Posterior cingulate gyrus (tissue), 11 donors: ENCODE measurements at regions of chr12 and their contacts with region 1.

Region 1: DNA sequence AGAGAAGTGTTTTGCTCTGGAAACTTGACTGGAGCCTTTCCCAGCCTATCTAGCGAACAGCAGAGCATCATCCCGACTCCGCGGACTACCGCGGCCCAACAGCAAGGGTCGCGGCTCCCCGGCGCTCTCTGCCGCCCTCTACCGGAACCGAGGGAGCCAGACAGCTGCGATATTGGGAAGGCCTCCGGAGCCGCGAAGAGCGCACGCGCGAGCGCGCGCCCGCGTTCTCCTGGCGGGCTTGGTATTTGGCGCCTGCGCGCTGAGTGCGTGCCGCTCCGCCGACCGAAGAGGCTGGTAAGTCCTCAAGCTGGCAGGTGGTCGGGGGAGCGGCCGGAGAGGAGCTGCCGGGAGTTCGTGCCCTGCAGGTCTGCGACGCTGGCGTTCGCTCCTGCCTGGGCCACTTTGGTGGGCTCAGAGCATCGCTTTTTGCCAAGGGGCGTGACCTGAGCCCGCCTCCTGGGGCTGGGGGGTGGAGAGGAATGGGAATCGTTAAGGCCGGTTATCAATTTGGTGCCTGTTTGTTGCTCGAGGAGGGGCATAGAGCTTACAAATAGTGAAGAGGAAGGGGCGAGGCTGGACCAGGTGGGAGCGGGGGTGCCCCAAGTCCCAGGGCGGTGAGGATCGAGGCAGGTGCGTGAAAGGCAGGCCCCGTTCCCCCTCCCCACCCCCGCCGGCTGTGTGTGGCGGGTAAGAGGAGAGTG is at the start of gene TMEM106C:
- DNase-seq: peak; percentile 81 to 98 (median 89)

Region 2: DNA sequence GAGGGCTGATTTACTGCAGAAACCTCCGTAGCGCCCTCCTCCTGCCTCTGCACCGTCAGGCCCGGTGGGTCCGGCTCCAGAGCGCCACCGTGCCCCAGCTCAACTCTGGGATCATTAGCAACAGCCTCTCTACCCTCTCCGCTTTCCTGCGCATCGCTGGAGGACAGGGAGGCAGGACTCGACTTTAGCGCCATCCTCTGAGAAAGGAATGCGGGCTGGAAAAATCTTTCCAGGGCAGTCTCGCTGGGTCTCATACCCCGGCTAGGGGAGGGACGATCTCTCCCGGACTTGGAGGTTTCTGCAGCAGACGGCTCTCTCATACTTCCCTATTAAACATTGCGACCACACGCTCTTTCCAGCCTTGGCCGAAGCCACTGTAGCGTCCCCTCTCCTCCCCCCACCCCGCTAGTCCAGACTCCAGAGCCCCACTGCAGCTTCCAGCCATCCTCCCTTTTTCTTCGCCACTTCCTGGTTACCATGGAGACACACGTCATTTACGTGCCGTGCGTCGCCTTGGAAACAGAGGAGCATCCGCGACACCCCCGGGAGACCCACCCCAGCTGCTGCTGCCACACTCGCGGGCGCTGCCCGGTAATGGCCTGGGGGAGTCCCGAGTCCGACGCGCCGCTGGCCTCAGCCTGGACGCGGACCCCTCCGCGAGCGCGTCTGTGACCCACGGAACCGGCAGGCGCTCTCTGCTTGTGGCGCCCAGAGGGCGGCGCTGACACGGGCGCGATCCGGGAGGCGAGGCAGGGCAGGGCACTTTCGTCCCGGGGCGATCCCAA is 219.8 kb after region 1 on chr12 and contains the start of gene CCDC184:
- intact Hi-C with region 1: loop called (anchors 10 kb)
- DNase-seq: peak; percentile 60 to 97 (median 84)